ENCODE measurements at regions of chr16 and their contacts with region 1.

Region 1: GRCh38 chr16:1194665-1195392 is 30.2 kb downstream of the TPSG1 start:
- DNase-seq: peak in 6 of 14 experiments; percentile 13 to 51 (median 40)
- ATAC-seq: no peak
- H3K4me3 ChIP-seq: no peak overlapping the region
- H3K4me3 Mint-ChIP-seq: no peak overlapping the region
- H3K27ac ChIP-seq: no peak overlapping the region
- H3K27ac Mint-ChIP-seq: no peak overlapping the region
- H3K4me1 ChIP-seq: peaks cover 5% of the 10 kb centered on the region
- H3K4me1 Mint-ChIP-seq: no peaks in the 10 kb centered on the region
- H3K27me3 ChIP-seq: peaks cover 0 to 3% of the 10 kb centered on the region in 2 experiments
- H3K27me3 Mint-ChIP-seq: no peaks in the 10 kb centered on the region
- CTCF ChIP-seq: peak; percentile 70

Region 2: GRCh38 chr16:813204-813915 is 381.5 kb before region 1 on chr16:
- CTCF ChIA-PET with region 1: no interaction called
- POLR2A ChIA-PET with region 1: no interaction called
- intact Hi-C with region 1: loop called (anchors 5 to 10 kb)
- DNase-seq: peak in 13 of 14 experiments; percentile 32 to 70 (median 45)
- ATAC-seq: peak; percentile 60
- H3K4me3 ChIP-seq: no peak overlapping the region
- H3K4me3 Mint-ChIP-seq: peak overlapping the region; percentile 60
- H3K27ac ChIP-seq: no peak overlapping the region
- H3K27ac Mint-ChIP-seq: no peak overlapping the region
- H3K4me1 ChIP-seq: peaks cover 15% of the 10 kb centered on the region
- H3K4me1 Mint-ChIP-seq: peaks cover 9% of the 10 kb centered on the region
- H3K27me3 ChIP-seq: peaks cover 20 to 43% of the 10 kb centered on the region in 2 experiments
- H3K27me3 Mint-ChIP-seq: peaks cover 32% of the 10 kb centered on the region
- CTCF ChIP-seq: peak; percentile 65

Region 3: GRCh38 chr16:1054660-1055556 is 139.9 kb before region 1 on chr16:
- CTCF ChIA-PET with region 1: no interaction called
- POLR2A ChIA-PET with region 1: no interaction called
- intact Hi-C with region 1: loop called in 1 of 2 experiments (anchors 1 kb)
- DNase-seq: peak in 11 of 14 experiments; percentile 12 to 63 (median 28)
- ATAC-seq: no peak
- H3K4me3 ChIP-seq: no peak overlapping the region
- H3K4me3 Mint-ChIP-seq: no peak overlapping the region
- H3K27ac ChIP-seq: no peak overlapping the region
- H3K27ac Mint-ChIP-seq: no peak overlapping the region
- H3K4me1 ChIP-seq: peaks cover 11% of the 10 kb centered on the region
- H3K4me1 Mint-ChIP-seq: no peaks in the 10 kb centered on the region
- H3K27me3 ChIP-seq: peaks cover 0 to 8% of the 10 kb centered on the region in 2 experiments
- H3K27me3 Mint-ChIP-seq: peaks cover 4% of the 10 kb centered on the region
- CTCF ChIP-seq: peak; percentile 66

Region 4: DNA sequence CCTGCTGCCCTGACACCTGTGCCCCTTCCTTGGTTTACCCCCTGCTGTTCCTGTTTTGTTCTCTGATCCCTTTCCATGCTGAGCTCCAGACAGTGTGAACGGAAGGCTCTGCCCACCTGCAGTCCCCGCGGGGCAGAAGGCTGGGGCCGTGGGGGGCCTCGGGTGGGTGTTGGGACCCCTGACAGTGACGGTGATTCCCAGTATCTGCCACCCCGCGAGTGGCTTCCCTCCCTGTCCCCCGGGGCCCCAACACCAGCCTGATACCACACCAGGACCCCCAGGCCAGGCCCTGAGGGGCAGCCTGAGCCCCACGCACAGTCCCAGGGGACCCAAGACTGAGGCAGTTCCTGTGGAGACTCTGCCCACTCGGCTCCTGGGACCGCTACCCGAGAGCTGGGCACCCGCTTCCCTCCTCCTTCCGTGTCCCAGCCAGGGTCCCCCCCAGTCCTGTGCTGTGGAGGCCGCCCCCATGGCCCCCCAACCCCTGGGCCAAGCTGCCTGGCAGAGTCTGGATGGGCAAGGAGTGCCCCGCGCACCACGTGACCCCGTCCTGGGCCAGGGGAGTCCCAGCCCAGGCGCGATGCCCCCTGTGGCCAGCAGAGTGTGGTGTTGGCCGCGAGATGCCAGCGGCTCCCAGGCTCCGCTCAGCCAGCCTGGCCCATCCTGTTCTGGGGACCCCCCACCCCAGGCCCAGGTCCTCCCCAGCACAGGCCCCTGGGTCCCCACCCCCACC is 88.8 kb before region 1 on chr16:
- CTCF ChIA-PET with region 1: no interaction called
- POLR2A ChIA-PET with region 1: no interaction called
- intact Hi-C with region 1: loop called in 1 of 2 experiments (anchors 1 kb)
- DNase-seq: peak in 13 of 14 experiments; percentile 11 to 69 (median 33)
- ATAC-seq: peak; percentile 67
- H3K4me3 ChIP-seq: no peak overlapping the region
- H3K4me3 Mint-ChIP-seq: no peak overlapping the region
- H3K27ac ChIP-seq: no peak overlapping the region
- H3K27ac Mint-ChIP-seq: no peak overlapping the region
- H3K4me1 ChIP-seq: peaks cover 9% of the 10 kb centered on the region
- H3K4me1 Mint-ChIP-seq: no peaks in the 10 kb centered on the region
- H3K27me3 ChIP-seq: peaks cover 23 to 36% of the 10 kb centered on the region in 2 experiments
- H3K27me3 Mint-ChIP-seq: peaks cover 14% of the 10 kb centered on the region
- CTCF ChIP-seq: peak; percentile 39